ENCODE measurements at regions of chr4 and their contacts with region 1.

Region 1: GRCh38 chr4:36385951-36386571 is 104.6 kb downstream of the DTHD1 start:
- DNase-seq: peak; percentile 8 to 89 (median 82)
- ATAC-seq: peak; percentile 99
- H3K4me3 ChIP-seq: peak overlapping the region; percentile 29
- H3K4me3 Mint-ChIP-seq: peak overlapping the region; percentile 46 to 84 (median 70)
- H3K27ac ChIP-seq: peak overlapping the region; percentile 70
- H3K27ac Mint-ChIP-seq: peak overlapping the region; percentile 92 to 99 (median 94)
- H3K4me1 ChIP-seq: peaks cover 22% of the 10 kb centered on the region in 2 donors
- H3K4me1 Mint-ChIP-seq: peaks cover 19 to 51% (median 40%) of the 10 kb centered on the region in 7 donors
- H3K27me3 ChIP-seq: no peaks in the 10 kb centered on the region
- H3K27me3 Mint-ChIP-seq: peaks cover 0 to 11% (median 0%) of the 10 kb centered on the region in 5 donors

Region 2: GRCh38 chr4:36358173-36358572 is 27.9 kb before region 1 on chr4:
- CTCF ChIA-PET with region 1: no interaction called
- POLR2A ChIA-PET with region 1: no interaction called
- intact Hi-C with region 1: loop called in 1 of 2 experiments (anchors 2 kb)
- DNase-seq: no peak
- ATAC-seq: no peak
- H3K4me3 ChIP-seq: no peak overlapping the region
- H3K4me3 Mint-ChIP-seq: no peak overlapping the region
- H3K27ac ChIP-seq: no peak overlapping the region
- H3K27ac Mint-ChIP-seq: peak overlapping the region in 1 of 9 donors; percentile 12
- H3K4me1 ChIP-seq: no peaks in the 10 kb centered on the region
- H3K4me1 Mint-ChIP-seq: no peaks in the 10 kb centered on the region
- H3K27me3 ChIP-seq: no peaks in the 10 kb centered on the region
- H3K27me3 Mint-ChIP-seq: peaks cover 0 to 26% (median 0%) of the 10 kb centered on the region in 5 donors

Region 3: GRCh38 chr4:36399762-36400353 is 13.8 kb after region 1 on chr4:
- CTCF ChIA-PET with region 1: interaction called, 20 read pairs
- POLR2A ChIA-PET with region 1: interaction called, 10 read pairs
- intact Hi-C with region 1: loop called (anchors 1 to 2 kb)
- DNase-seq: peak in 6 of 9 donors; percentile 37 to 59 (median 56)
- ATAC-seq: peak; percentile 81
- H3K4me3 ChIP-seq: no peak overlapping the region
- H3K4me3 Mint-ChIP-seq: no peak overlapping the region
- H3K27ac ChIP-seq: no peak overlapping the region
- H3K27ac Mint-ChIP-seq: no peak overlapping the region
- H3K4me1 ChIP-seq: peaks cover 0 to 3% of the 10 kb centered on the region in 2 donors
- H3K4me1 Mint-ChIP-seq: peaks cover 0 to 9% (median 6%) of the 10 kb centered on the region in 7 donors
- H3K27me3 ChIP-seq: no peaks in the 10 kb centered on the region
- H3K27me3 Mint-ChIP-seq: peaks cover 0 to 26% (median 2%) of the 10 kb centered on the region in 5 donors

Region 4: DNA sequence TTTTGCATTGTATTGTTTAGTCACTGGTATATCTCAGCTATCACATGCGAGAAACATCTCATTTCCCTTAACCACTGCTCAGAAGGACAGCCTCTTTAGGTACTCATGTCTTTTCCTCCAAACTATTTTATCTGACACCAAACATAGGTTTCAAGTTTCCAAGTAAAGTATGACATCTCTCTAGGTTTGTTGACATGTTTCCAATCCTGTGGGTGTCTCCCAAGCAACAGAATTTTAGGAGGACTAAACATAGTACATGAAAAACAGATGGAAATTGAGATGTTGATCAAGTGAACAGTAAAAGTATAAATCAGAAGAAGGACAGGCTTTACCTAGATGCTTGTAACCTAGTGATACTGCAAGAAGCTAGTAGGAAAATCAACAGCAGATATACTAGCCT is 266.8 kb after region 1 on chr4:
- CTCF ChIA-PET with region 1: no interaction called
- POLR2A ChIA-PET with region 1: no interaction called
- intact Hi-C with region 1: no loop called
- DNase-seq: no peak
- ATAC-seq: no peak
- H3K4me3 ChIP-seq: no peak overlapping the region
- H3K4me3 Mint-ChIP-seq: no peak overlapping the region
- H3K27ac ChIP-seq: no peak overlapping the region
- H3K27ac Mint-ChIP-seq: no peak overlapping the region
- H3K4me1 ChIP-seq: no peaks in the 10 kb centered on the region
- H3K4me1 Mint-ChIP-seq: peaks cover 0 to 9% (median 0%) of the 10 kb centered on the region in 7 donors
- H3K27me3 ChIP-seq: no peaks in the 10 kb centered on the region
- H3K27me3 Mint-ChIP-seq: peaks cover 0 to 2% (median 0%) of the 10 kb centered on the region in 5 donors

Measured in naive thymus-derived CD4-positive, alpha-beta T cell (primary cell).